ENCODE measurements at regions of chr10 and their contacts with region 1.

Region 1: GRCh38 chr10:76126607-76127527 is 695.4 kb downstream of the LRMDA start:
- DNase-seq: no peak
- ATAC-seq: no peak
- H3K4me3 ChIP-seq: no peak overlapping the region
- H3K27ac ChIP-seq: no peak overlapping the region
- H3K4me1 ChIP-seq: no peaks in the 10 kb centered on the region
- H3K27me3 ChIP-seq: no peaks in the 10 kb centered on the region

Region 2: DNA sequence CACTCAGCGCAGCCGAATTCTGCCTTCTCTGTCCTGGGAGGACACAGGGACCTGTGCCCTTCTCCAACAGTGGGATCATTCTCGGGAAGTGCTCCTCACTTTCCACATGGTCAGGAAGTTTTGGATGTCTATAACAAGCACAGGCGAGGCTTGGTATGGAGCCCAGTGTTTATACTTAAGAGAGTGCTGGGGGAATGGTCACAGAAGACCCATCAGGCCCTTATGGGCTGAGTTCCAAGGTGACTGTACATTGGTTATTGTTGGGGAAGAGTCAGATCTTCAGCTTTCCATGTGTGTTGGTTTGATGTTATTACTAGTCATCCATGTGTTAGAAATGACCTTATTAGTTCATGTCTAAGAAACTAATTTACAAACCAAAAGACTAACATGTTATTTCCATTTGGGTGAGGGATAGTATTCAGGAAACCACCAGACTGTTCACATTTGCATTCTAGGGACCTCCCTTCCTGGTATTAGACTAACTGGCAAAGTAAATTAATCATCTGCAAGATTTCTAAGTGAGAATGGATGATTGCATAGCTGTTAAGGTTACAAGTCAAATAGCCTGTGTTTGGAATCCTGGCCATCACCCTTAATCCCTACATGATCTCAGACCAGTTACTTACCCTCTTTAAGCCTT is 138.7 kb after region 1 on chr10:
- intact Hi-C with region 1: loop called in 1 of 2 experiments (anchors 10 kb)
- DNase-seq: no peak
- ATAC-seq: no peak
- H3K4me3 ChIP-seq: no peak overlapping the region
- H3K27ac ChIP-seq: no peak overlapping the region
- H3K4me1 ChIP-seq: no peaks in the 10 kb centered on the region
- H3K27me3 ChIP-seq: no peaks in the 10 kb centered on the region

Measured in aorta (tissue), 5 donors.